ENCODE measurements at regions of chr14 and their contacts with region 1.

Region 1: GRCh38 chr14:47585447-47585846 is 90.0 kb downstream of the MDGA2 start:
- DNase-seq: no peak
- ATAC-seq: no peak
- H3K4me3 ChIP-seq: no peak overlapping the region
- H3K27ac ChIP-seq: no peak overlapping the region
- H3K4me1 ChIP-seq: no peaks in the 10 kb centered on the region
- H3K27me3 ChIP-seq: no peaks in the 10 kb centered on the region
- CTCF ChIP-seq: no peak
- EP300 ChIP-seq: no peak
- POLR2A ChIP-seq: no peak
- RAD21 ChIP-seq: no peak

Region 2: DNA sequence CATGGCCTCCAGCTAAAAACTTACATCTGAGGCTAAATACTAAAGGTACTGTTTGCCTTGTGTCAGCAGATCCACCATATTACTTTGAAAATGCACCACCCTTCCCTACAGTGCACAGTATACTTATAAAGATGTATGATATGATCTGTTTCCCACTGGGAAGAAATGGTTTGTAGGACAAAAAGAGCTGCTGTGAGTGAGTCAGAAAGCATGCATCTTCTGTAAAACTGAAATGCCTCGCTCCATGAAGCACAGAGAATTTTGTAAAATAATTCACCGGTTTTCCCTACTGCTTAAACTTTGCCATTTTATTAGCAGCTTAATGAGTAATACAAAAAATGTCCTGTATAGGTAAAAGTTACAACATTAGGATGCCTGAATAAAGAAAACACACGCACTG is 21.1 kb after region 1 on chr14:
- CTCF ChIA-PET with region 1: no interaction called
- POLR2A ChIA-PET with region 1: no interaction called
- in situ Hi-C with region 1: no loop called
- intact Hi-C with region 1: no loop called
- DNase-seq: no peak
- ATAC-seq: no peak
- H3K4me3 ChIP-seq: no peak overlapping the region
- H3K27ac ChIP-seq: no peak overlapping the region
- H3K4me1 ChIP-seq: no peaks in the 10 kb centered on the region
- H3K27me3 ChIP-seq: no peaks in the 10 kb centered on the region
- CTCF ChIP-seq: no peak
- EP300 ChIP-seq: no peak
- POLR2A ChIP-seq: no peak
- RAD21 ChIP-seq: no peak

Region 3: GRCh38 chr14:48229091-48229490 is 643.6 kb after region 1 on chr14:
- CTCF ChIA-PET with region 1: no interaction called
- POLR2A ChIA-PET with region 1: no interaction called
- in situ Hi-C with region 1: no loop called
- intact Hi-C with region 1: loop called (anchors 10 kb)
- DNase-seq: no peak
- ATAC-seq: no peak
- H3K4me3 ChIP-seq: no peak overlapping the region
- H3K27ac ChIP-seq: no peak overlapping the region
- H3K4me1 ChIP-seq: no peaks in the 10 kb centered on the region
- H3K27me3 ChIP-seq: no peaks in the 10 kb centered on the region
- CTCF ChIP-seq: no peak
- EP300 ChIP-seq: no peak
- POLR2A ChIP-seq: no peak
- RAD21 ChIP-seq: no peak